Activated B cell treated with CpG ODN at 0.5 μM for 24 hours (primary cell): ENCODE measurements at regions of chr5 and their contacts with region 1.

Region 1: DNA sequence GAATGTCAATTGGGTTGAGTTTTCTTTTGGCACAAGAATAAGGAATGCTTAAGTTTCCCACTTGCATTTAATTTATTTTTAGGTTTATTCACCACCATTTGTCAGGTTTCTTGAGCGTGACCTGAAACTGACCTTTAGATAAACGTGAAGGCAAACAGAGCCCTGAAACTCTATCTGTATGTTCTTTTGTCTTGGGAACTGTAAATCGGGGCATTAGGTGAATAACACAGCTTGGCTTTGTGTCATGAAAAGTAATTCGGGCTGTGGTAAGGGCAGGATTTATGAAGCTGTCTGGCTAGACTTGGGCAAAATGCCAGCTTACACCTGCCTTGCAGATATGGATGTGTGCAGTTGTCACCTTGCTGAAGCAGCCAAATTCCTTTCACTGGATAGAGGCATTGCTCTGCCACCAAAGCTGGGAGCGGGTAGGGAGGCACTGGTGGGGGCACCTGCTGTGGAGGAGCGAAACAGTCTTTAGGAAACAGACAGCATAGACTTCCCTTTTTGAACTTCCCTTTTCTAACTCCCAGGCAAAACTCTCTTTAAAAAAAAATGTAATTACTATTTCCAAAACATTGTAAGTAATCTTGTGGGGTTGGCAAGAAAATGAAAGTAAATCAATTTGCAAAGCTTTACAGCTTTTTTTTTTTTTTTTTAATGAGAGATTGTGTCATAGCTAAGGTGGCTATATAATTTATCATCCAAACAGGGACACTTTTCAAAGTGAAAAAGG is 545.2 kb downstream of the CSNK1G3 start:
- DNase-seq: peak; percentile 59
- ATAC-seq: peak; percentile 85
- H3K4me3 Mint-ChIP-seq: peak overlapping the region; percentile 82
- H3K27ac Mint-ChIP-seq: peak overlapping the region; percentile 90
- H3K4me1 Mint-ChIP-seq: peaks cover 57% of the 10 kb centered on the region
- H3K27me3 Mint-ChIP-seq: no peaks in the 10 kb centered on the region
- CTCF ChIP-seq: no peak

Region 2: GRCh38 chr5:123511648-123512605 is 545.2 kb before region 1 on chr5 and contains the start of gene CSNK1G3:
- CTCF ChIA-PET with region 1: no interaction called
- POLR2A ChIA-PET with region 1: no interaction called
- intact Hi-C with region 1: loop called (anchors 10 kb)
- DNase-seq: peak; percentile 81
- ATAC-seq: peak; percentile 91
- H3K4me3 Mint-ChIP-seq: peak within 1 kb of the TSS; percentile 99
- H3K27ac Mint-ChIP-seq: peak within 1 kb of the TSS; percentile 99
- H3K4me1 Mint-ChIP-seq: peaks cover 47% of the 10 kb centered on the region
- H3K27me3 Mint-ChIP-seq: no peaks in the 10 kb centered on the region
- CTCF ChIP-seq: no peak
- total RNA-seq, gene CSNK1G3: 79.9 and 82.7 TPM in 2 replicates

Region 3: DNA sequence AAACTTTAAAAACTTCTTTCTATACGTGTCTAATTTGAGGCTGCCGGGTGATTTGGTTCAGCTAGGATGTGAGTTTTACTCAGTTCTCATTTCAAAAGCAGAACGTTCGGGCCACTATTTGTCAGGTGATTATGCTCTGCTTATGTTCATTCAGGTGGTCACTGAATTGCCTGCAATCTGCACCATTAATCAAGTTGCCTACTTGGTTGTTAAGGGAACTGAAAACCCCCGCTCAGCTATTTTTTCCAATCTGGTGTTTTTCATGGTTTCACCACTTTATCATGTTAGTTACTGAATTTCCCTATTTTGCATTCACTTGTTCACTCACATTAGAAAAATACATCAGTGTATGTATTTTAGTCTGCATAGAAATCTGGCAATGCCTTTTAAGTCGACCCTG is 22.2 kb before region 1 on chr5:
- CTCF ChIA-PET with region 1: no interaction called
- POLR2A ChIA-PET with region 1: interaction called, 7 read pairs
- intact Hi-C with region 1: loop called (anchors 1 kb)
- DNase-seq: no peak
- ATAC-seq: peak; percentile 94
- H3K4me3 Mint-ChIP-seq: peak overlapping the region; percentile 48
- H3K27ac Mint-ChIP-seq: peak overlapping the region; percentile 92
- H3K4me1 Mint-ChIP-seq: peaks cover 52% of the 10 kb centered on the region
- H3K27me3 Mint-ChIP-seq: no peaks in the 10 kb centered on the region
- CTCF ChIP-seq: no peak

Region 4: DNA sequence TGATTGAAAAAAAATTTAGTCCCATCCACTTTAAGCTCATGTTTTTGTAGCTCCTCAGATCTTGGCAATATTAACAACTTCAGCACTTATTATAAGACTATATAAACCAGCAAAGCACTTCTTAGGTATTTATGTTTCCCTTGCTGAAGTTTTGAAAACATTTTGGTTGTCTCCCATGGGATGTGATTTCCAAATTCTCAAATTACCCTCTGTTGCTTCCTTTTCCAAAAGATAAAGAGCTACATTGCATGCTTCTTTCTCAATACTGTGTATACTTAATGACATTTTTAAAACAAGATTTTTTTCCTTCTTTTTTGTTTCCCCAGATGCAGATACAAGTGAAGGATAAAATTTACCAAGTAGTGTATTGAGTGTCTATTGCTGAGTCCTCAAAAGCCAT is 21.9 kb after region 1 on chr5:
- CTCF ChIA-PET with region 1: no interaction called
- POLR2A ChIA-PET with region 1: no interaction called
- intact Hi-C with region 1: loop called (anchors 1 kb)
- DNase-seq: no peak
- ATAC-seq: no peak
- H3K4me3 Mint-ChIP-seq: no peak overlapping the region
- H3K27ac Mint-ChIP-seq: no peak overlapping the region
- H3K4me1 Mint-ChIP-seq: peaks cover 30% of the 10 kb centered on the region
- H3K27me3 Mint-ChIP-seq: no peaks in the 10 kb centered on the region
- CTCF ChIP-seq: no peak

Region 5: GRCh38 chr5:124453221-124454051 is 396.3 kb after region 1 on chr5:
- CTCF ChIA-PET with region 1: no interaction called
- POLR2A ChIA-PET with region 1: no interaction called
- intact Hi-C with region 1: loop called (anchors 5 kb)
- DNase-seq: peak; percentile 31
- ATAC-seq: peak; percentile 95
- H3K4me3 Mint-ChIP-seq: peak overlapping the region; percentile 67
- H3K27ac Mint-ChIP-seq: peak overlapping the region; percentile 79
- H3K4me1 Mint-ChIP-seq: peaks cover 43% of the 10 kb centered on the region
- H3K27me3 Mint-ChIP-seq: no peaks in the 10 kb centered on the region
- CTCF ChIP-seq: no peak

Region 6: GRCh38 chr5:124706729-124707361 is 649.7 kb after region 1 on chr5:
- CTCF ChIA-PET with region 1: no interaction called
- POLR2A ChIA-PET with region 1: no interaction called
- intact Hi-C with region 1: loop called (anchors 2 kb)
- DNase-seq: no peak
- ATAC-seq: no peak
- H3K4me3 Mint-ChIP-seq: peak overlapping the region; percentile 67
- H3K27ac Mint-ChIP-seq: peak overlapping the region; percentile 89
- H3K4me1 Mint-ChIP-seq: peaks cover 92% of the 10 kb centered on the region
- H3K27me3 Mint-ChIP-seq: no peaks in the 10 kb centered on the region
- CTCF ChIP-seq: no peak

Region 7: GRCh38 chr5:125006011-125006685 is 949.0 kb after region 1 on chr5:
- CTCF ChIA-PET with region 1: no interaction called
- POLR2A ChIA-PET with region 1: no interaction called
- intact Hi-C with region 1: loop called (anchors 2 kb)
- DNase-seq: no peak
- ATAC-seq: peak; percentile 67
- H3K4me3 Mint-ChIP-seq: peak overlapping the region; percentile 66
- H3K27ac Mint-ChIP-seq: peak overlapping the region; percentile 90
- H3K4me1 Mint-ChIP-seq: peaks cover 71% of the 10 kb centered on the region
- H3K27me3 Mint-ChIP-seq: no peaks in the 10 kb centered on the region
- CTCF ChIP-seq: no peak